Cardiac septum (tissue), 1 donor: ENCODE measurements at regions of chr19 and their contacts with region 1.

Region 1: DNA sequence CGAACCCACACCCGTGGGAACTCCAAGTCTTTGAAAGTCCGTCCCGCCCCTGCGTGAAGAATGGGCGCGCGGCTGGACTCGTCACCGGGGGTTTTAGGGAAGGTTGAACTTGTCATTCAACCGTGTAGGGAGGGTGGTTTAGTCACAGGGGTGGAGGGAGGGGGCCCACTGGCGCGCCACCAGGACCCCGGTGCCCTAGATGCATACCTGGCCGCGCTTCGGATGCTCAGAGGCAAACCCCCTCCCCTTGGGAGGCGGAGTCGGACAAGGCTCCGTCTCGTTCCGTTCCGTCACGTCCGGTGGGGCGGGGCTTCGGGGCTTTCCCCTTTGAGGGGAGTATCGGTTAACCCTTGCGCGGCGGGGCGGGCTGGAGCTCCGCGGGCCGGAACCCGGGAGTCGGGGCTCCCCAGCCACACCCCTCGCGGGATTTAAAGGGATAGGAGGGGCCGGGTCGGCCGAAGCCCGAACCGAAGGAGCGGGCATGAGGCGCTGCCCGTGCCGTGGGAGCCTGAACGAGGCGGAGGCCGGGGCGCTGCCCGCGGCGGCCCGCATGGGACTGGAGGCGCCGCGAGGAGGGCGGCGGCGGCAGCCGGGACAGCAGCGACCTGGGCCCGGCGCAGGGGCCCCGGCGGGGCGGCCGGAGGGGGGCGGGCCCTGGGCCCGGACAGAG is at the starts of genes COQ8B and ITPKC:
- DNase-seq: peak; percentile 100
- total RNA-seq, gene COQ8B: 18.1 TPM
- total RNA-seq, gene ITPKC: 10.0 TPM

Region 2: GRCh38 chr19:39986643-39987042 is 730.1 kb before region 1 on chr19:
- intact Hi-C with region 1: no loop called
- DNase-seq: no peak

Region 3: GRCh38 chr19:40444192-40445028 is 272.4 kb before region 1 on chr19 and contains the start of gene SERTAD3:
- intact Hi-C with region 1: loop called (anchors 10 kb)
- DNase-seq: peak; percentile 98
- total RNA-seq, gene SERTAD3: 33.9 TPM

Region 4: GRCh38 chr19:40662921-40663694 is 53.7 kb before region 1 on chr19:
- intact Hi-C with region 1: loop called (anchors 1 kb)
- DNase-seq: peak; percentile 96

Region 5: DNA sequence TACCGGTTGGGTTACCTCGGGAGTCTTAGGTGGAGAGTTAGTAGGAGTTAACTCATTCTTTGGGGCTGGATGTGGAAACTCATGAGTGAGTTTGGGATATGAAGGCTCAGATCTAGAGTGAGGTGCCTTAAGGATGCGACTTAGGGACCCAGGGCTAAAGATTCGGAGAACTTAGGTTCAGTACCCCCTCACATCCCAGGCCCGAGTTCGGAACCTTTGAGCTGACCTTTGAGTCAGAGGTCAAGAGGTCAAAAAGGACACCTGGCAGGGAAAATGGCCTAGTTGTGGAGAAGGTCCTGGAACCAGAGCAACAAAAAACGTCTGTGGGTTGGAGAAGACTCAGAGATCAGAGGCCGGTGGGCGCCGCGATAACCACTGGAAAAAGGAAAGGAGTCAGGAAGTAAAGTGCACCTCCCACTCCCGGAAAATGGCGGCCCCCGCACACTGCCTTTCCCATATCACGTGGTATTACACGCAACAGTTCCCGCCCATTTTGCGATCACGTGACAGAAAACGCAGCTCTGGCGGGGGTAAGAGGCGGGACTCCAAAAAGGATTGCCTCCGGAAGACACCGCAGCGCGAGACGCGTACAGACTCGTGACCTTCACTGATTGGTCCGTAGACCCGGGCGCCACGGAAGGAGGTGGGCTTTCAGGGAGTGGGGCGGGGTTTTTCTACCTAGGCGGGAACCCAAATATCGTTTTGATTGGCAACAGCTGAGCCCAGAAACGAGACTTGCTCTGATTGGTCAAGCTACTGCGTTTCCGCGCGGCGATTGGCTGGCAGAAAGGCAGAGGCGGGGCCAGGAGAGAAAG is 33.5 kb after region 1 on chr19 and contains the start of gene ACTMAP:
- intact Hi-C with region 1: loop called (anchors 2 kb)
- DNase-seq: peak; percentile 100
- total RNA-seq, gene ACTMAP: 9.2 TPM